Ascending aorta (tissue), 2 donors: ENCODE measurements at regions of chr21 and their contacts with region 1.

Region 1: GRCh38 chr21:33403779-33404585 is 769 bp downstream of the IFNGR2 start:
- DNase-seq: peak in 1 of 2 donors; percentile 84
- H3K4me3 ChIP-seq: peak overlapping the region; percentile 89 to 97
- H3K27ac ChIP-seq: peak overlapping the region; percentile 97 to 99
- H3K4me1 ChIP-seq: peaks cover 0 to 19% of the 10 kb centered on the region in 2 donors
- H3K27me3 ChIP-seq: no peaks in the 10 kb centered on the region
- CTCF ChIP-seq: no peak

Region 2: DNA sequence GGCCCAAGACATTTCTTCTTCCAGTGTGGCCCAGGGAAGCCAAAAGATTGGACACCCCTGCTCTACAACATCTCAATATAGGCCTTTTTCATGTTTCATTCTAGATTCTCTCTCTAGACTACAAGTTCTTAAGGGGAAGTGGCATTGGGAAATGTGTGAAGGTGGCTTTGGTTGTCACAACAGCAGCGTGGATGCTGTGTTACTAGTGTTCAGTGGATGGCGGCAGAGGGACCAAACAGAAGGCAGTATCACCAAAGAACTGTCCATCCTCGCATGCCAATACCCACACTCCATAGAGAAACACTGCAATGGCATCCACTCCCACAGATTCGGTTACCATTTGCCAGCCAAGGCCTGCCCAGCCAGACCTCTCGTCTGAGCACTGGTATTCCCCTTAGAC is 198.5 kb before region 1 on chr21:
- intact Hi-C with region 1: no loop called
- DNase-seq: no peak
- H3K4me3 ChIP-seq: no peak overlapping the region
- H3K27ac ChIP-seq: no peak overlapping the region
- H3K4me1 ChIP-seq: peaks cover 2 to 6% of the 10 kb centered on the region in 2 donors
- H3K27me3 ChIP-seq: no peaks in the 10 kb centered on the region
- CTCF ChIP-seq: no peak

Region 3: GRCh38 chr21:33380483-33380998 is 23.4 kb before region 1 on chr21:
- intact Hi-C with region 1: loop called (anchors 1 kb)
- DNase-seq: peak; percentile 91 to 98
- H3K4me3 ChIP-seq: no peak overlapping the region
- H3K27ac ChIP-seq: peak overlapping the region; percentile 77 to 82
- H3K4me1 ChIP-seq: peaks cover 6 to 27% of the 10 kb centered on the region in 2 donors
- H3K27me3 ChIP-seq: no peaks in the 10 kb centered on the region
- CTCF ChIP-seq: no peak

Region 4: DNA sequence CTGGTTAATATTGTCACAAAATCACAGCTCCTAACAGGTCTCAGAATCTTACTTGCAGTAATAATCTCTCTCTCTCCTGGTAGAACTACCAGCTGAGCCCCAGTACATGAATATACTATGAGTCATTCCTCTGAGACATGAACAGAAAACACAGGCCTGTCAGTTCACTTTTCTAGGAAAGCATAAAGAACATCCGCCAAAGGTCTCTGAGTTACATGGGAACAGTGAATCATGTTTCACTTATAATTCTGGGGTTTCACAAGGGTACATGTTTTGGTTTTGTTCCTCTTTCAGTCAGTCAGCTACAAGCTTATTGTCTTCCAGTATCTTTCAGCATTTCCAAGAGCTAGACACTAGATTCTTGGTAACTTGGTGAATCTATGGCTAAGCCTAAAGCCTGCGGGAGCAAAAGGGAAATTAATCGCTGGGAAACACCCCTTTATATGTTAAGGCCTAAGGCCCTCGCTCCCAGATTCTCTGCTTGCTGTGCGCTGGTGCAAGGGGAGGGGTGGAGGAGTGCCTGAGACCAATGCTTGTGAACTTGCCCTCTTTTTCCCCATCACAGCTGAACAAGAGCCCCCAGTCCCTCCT is 30.9 kb after region 1 on chr21:
- intact Hi-C with region 1: loop called (anchors 2 kb)
- DNase-seq: no peak
- H3K4me3 ChIP-seq: peak overlapping the region in 1 of 2 donors; percentile 23
- H3K27ac ChIP-seq: peak overlapping the region; percentile 67 to 91
- H3K4me1 ChIP-seq: peaks cover 11 to 18% of the 10 kb centered on the region in 2 donors
- H3K27me3 ChIP-seq: no peaks in the 10 kb centered on the region
- CTCF ChIP-seq: no peak

Region 5: DNA sequence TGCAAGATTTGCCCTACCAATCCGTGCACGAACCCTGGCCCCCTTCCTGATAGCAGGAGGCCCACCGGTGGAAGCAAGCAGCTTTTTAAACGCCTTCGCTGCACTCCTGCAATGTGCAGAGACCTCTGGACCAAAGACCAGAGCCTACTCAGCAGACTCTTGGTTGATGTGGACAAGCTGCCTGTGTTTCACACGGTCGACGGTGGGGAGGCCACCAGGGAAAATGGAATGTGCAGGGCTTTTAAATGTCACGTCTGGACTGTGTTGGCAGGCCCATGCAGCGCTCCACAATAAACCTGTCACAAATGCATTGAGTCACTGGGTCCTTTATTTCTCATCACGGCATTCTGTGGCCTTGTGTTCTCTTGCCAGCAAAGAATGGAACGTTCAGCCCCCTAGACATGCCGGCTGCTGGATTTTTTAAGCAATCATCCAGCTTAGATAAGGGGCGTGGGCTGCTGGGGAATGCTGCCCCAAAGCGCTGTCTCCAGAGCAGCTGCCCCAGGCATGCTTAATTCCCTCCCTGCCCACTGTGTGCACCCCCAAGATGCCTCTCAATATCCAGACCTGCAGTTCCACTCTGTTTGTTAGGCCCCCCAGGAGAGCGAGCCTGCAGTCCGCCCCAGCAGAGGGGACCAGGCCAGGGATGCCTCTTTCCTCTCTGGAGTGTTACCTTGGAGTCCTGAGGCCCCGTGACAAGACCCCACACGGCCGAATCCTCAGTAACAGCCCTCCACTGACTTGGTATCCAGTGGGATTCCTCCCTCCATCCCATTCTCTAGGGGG is 440.3 kb after region 1 on chr21:
- intact Hi-C with region 1: no loop called
- DNase-seq: peak in 1 of 2 donors; percentile 62
- H3K4me3 ChIP-seq: no peak overlapping the region
- H3K27ac ChIP-seq: no peak overlapping the region
- H3K4me1 ChIP-seq: peaks cover 0 to 12% of the 10 kb centered on the region in 2 donors
- H3K27me3 ChIP-seq: no peaks in the 10 kb centered on the region
- CTCF ChIP-seq: no peak